ENCODE measurements at regions of chr1 and their contacts with region 1.

Region 1: DNA sequence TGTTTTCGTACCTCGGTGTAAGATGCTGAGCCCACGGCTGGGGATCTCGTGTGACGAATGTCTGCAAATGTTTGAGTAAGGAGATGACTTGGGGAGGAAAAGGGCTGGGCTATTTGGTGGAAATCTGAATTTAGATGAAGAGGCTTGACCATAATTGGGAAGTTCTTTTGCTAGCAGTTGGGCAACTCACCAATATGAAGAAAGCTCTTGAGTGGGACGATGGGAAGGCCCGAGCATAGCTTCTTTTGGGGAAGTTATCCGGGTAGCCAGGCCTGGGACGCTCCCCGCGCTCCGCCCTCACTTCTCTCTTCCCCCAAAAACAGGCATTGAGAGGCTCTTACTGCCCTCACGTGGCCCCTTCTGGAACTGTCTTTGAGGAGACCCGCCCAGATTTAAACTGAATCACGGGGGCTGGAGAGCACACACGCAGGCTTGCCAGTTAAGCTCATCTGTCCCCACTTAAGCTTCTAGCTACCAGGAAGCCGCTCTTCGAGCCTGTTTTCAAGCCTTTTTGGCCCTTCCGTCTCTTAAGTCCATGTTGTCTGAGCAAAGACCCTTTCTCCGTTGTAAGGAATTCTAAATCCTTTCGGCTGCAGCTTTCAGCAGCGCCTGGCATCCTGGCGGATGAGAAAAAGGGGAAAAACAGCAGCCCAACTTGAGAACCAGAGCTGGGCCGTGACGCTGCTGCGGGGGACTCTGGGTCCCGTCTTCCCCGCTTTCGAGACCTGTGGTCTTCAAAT is 93.1 kb downstream of the NID1 start:
- DNase-seq: peak; percentile 82 to 88
- H3K4me3 ChIP-seq: peak overlapping the region; percentile 34
- H3K4me3 Mint-ChIP-seq: peak overlapping the region; percentile 66
- H3K27ac Mint-ChIP-seq: peak overlapping the region; percentile 40
- H3K4me1 ChIP-seq: peaks cover 5% of the 10 kb centered on the region; the same call in 1 of the 2 replicates
- H3K4me1 Mint-ChIP-seq: peaks cover 18% of the 10 kb centered on the region
- H3K27me3 ChIP-seq: no peaks in the 10 kb centered on the region
- H3K27me3 Mint-ChIP-seq: no peaks in the 10 kb centered on the region
- CTCF ChIP-seq: peak; percentile 83 to 84

Region 2: DNA sequence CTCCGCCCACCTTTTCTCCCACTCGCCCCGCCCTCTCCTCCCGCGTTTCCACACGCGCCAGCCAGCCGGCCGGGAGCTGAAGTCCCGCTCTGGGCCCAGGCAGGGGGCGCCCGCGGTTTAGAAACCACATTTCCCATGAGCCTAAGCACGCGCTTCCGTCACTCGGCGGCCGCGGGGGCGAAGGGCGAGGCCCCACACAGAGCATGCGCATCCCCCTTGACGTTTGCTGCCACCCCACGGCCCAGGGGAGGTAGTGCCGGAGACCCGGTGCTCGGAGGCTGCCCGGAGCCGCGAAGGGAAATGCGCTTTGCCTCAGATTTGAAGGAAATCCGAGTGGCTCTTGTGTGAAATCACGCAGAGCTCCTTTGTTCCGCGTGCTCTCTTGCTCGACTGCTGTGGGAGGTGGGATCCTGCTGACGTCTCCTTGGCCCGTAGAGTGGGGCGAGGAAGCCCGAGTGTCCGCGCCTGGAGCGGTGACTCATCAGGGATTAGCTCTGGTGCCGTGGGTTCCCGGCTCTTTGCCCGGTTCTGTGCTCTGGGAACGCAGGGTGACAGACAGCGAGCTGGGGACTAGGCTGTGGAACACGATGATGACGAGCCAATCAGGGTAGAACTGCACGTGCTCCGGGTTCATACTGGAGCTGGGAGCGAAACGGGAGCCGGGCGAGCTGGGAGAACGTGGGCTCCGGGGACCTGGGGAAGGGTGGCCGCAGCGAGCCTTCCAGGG is 467.1 kb before region 1 on chr1:
- CTCF ChIA-PET with region 1: no interaction called
- POLR2A ChIA-PET with region 1: no interaction called
- intact Hi-C with region 1: loop called (anchors 2 kb)
- DNase-seq: peak; percentile 98 to 99
- H3K4me3 ChIP-seq: peak overlapping the region; percentile 99
- H3K4me3 Mint-ChIP-seq: peak overlapping the region; percentile 100
- H3K27ac Mint-ChIP-seq: peak overlapping the region; percentile 100
- H3K4me1 ChIP-seq: peaks cover 17% of the 10 kb centered on the region
- H3K4me1 Mint-ChIP-seq: peaks cover 9% of the 10 kb centered on the region
- H3K27me3 ChIP-seq: no peaks in the 10 kb centered on the region
- H3K27me3 Mint-ChIP-seq: peaks cover 2% of the 10 kb centered on the region
- CTCF ChIP-seq: peak; percentile 87 to 94

Region 3: GRCh38 chr1:235783148-235783776 is 188.5 kb before region 1 on chr1:
- CTCF ChIA-PET with region 1: interaction called, 4 read pairs
- POLR2A ChIA-PET with region 1: no interaction called
- intact Hi-C with region 1: loop called (anchors 5 kb)
- DNase-seq: peak in 1 of 2 experiments; percentile 26
- H3K4me3 ChIP-seq: no peak overlapping the region
- H3K4me3 Mint-ChIP-seq: no peak overlapping the region
- H3K27ac Mint-ChIP-seq: no peak overlapping the region
- H3K4me1 ChIP-seq: no peaks in the 10 kb centered on the region
- H3K4me1 Mint-ChIP-seq: no peaks in the 10 kb centered on the region
- H3K27me3 ChIP-seq: no peaks in the 10 kb centered on the region
- H3K27me3 Mint-ChIP-seq: no peaks in the 10 kb centered on the region
- CTCF ChIP-seq: peak; percentile 41 to 62

Region 4: GRCh38 chr1:235843461-235843961 is 128.2 kb before region 1 on chr1:
- CTCF ChIA-PET with region 1: interaction called, 12 read pairs
- POLR2A ChIA-PET with region 1: no interaction called
- intact Hi-C with region 1: no loop called
- DNase-seq: peak in 1 of 2 experiments; percentile 35
- H3K4me3 ChIP-seq: no peak overlapping the region
- H3K4me3 Mint-ChIP-seq: no peak overlapping the region
- H3K27ac Mint-ChIP-seq: no peak overlapping the region
- H3K4me1 ChIP-seq: no peaks in the 10 kb centered on the region
- H3K4me1 Mint-ChIP-seq: peaks cover 12% of the 10 kb centered on the region
- H3K27me3 ChIP-seq: no peaks in the 10 kb centered on the region
- H3K27me3 Mint-ChIP-seq: peaks cover 4% of the 10 kb centered on the region
- CTCF ChIP-seq: peak; percentile 55 to 69

Region 5: DNA sequence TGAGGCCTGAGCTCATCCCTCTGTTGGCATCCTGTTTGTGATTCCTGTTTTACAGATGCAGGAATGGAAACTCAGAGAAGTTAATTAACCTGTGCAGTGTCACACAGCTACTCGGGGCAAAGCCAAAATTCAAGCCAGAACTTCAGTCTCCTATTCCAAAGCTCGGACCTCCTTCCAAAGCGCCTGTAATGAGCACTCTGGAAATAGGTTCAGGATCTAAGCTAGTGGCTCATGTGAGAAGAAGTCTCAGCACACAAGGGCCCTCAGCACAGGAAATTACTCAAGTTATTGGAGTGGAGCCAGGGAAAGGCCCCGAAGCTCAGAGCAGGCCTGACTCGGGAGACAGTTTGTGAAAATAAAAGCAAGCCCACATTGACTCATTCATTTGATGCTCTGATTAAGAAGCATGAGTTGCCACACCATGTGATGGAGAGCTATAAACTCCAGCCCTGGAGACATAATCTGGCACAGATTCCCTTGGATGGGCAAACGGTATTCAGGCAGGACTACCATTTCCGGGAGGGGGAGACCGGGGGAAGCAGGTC is 54.4 kb before region 1 on chr1:
- CTCF ChIA-PET with region 1: interaction called, 10 read pairs
- POLR2A ChIA-PET with region 1: no interaction called
- intact Hi-C with region 1: no loop called
- DNase-seq: no peak
- H3K4me3 ChIP-seq: no peak overlapping the region
- H3K4me3 Mint-ChIP-seq: no peak overlapping the region
- H3K27ac Mint-ChIP-seq: no peak overlapping the region
- H3K4me1 ChIP-seq: peaks cover 17% of the 10 kb centered on the region
- H3K4me1 Mint-ChIP-seq: peaks cover 7% of the 10 kb centered on the region
- H3K27me3 ChIP-seq: no peaks in the 10 kb centered on the region
- H3K27me3 Mint-ChIP-seq: no peaks in the 10 kb centered on the region
- CTCF ChIP-seq: no peak